GM12878 (cell line): ENCODE measurements at regions of chr4 and their contacts with region 1.

Region 1: GRCh38 chr4:15778289-15779241 is at the start of gene CD38:
- DNase-seq: no peak
- ATAC-seq: peak; percentile 85
- H3K4me3 ChIP-seq: peak within 1 kb of the TSS; percentile 72
- H3K27ac ChIP-seq: peak within 1 kb of the TSS; percentile 78
- H3K4me1 ChIP-seq: peaks cover 36% of the 10 kb centered on the region
- H3K27me3 ChIP-seq: peaks cover 0 to 3% of the 10 kb centered on the region in 2 experiments; a peak in 1 of 4 replicates
- CTCF ChIP-seq: 0 out of 6 replicates have a peak, but pooled peaks of 2 of the 3 experiments have one; percentile 7 to 15
- EP300 ChIP-seq: peak; percentile 65 to 77
- POLR2A ChIP-seq: peak; percentile 78
- RAD21 ChIP-seq: no peak
- polyA plus RNA-seq, gene CD38: 3.5 to 4.8 TPM

Region 2: DNA sequence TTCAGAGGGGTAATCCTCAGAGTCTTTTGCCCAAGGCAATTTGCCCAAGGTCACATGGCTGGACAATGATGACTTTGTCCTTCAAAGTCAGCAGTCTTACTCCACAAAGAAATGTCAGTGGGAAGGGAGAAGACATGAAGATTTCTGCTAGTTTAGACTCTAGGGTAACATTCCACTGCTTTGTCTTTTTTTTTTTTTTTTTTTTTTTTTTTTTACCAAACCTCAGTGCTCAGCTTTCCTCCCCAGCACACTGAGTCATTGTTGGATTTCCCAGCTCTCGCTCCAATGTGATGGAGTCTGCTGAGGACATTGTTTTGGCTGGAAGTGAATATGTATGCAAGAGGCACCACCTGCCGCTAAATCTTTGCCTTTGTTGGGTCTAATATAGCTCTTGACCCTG is 357.9 kb before region 1 on chr4:
- CTCF ChIA-PET with region 1: no interaction called
- POLR2A ChIA-PET with region 1: no interaction called
- RAD21 ChIA-PET with region 1: no interaction called
- SMC1A ChIA-PET with region 1: no interaction called
- in situ Hi-C with region 1: no loop called
- intact Hi-C with region 1: no loop called
- DNase-seq: no peak
- ATAC-seq: no peak
- H3K4me3 ChIP-seq: no peak overlapping the region
- H3K27ac ChIP-seq: no peak overlapping the region
- H3K4me1 ChIP-seq: no peaks in the 10 kb centered on the region
- H3K27me3 ChIP-seq: peaks cover 0 to 1% of the 10 kb centered on the region in 2 experiments; a peak in 1 of 4 replicates
- CTCF ChIP-seq: no peak
- EP300 ChIP-seq: no peak
- POLR2A ChIP-seq: no peak
- RAD21 ChIP-seq: no peak

Region 3: DNA sequence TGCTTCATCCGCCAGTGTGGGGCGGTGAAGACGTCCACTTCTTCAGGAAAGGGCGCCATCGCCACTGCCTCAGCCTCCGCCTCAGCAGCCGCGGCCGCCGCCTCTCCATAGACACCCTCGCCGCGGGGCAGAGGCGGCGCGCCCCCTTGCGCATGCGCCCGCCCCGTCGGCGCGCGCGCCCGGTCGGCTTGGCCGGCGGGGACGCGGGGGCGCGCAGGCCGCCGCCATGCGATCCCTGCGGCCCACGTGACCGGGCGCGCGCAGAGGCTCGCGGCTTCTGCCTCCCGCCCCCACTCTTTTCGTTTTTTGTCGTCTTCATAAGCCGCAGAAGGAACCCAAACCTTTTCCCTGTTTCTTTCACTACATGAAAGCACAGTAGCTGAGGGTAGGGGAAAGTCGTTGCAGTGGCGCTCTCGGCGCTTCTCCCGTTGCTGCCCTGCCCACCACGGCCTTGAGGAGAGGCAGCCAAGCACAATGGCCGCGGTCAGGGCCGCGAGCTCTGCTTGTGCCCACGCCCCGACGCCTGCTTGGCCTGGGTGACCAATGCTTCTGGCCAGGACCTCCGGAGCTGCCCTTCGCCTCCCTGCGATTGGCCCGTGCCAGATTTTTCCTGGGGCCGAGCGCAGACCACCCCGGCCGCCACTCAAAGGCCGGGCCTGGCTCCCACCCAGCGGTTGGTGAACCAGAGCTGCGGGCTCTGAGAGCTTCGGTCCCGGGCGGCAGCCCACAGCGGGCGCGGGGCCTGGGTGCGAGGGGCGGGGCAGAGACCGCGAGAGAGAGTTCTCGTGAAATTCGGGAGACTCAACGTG is 123.1 kb before region 1 on chr4 and contains the start of gene FBXL5:
- CTCF ChIA-PET with region 1: interaction called, 5 read pairs
- POLR2A ChIA-PET with region 1: no interaction called
- RAD21 ChIA-PET with region 1: no interaction called
- SMC1A ChIA-PET with region 1: interaction called, 4 read pairs
- in situ Hi-C with region 1: no loop called
- intact Hi-C with region 1: loop called (anchors 10 kb)
- DNase-seq: peak; percentile 36
- ATAC-seq: peak; percentile 64
- H3K4me3 ChIP-seq: peak within 1 kb of the TSS; percentile 84
- H3K27ac ChIP-seq: peak within 1 kb of the TSS; percentile 95
- H3K4me1 ChIP-seq: peaks cover 15% of the 10 kb centered on the region
- H3K27me3 ChIP-seq: no peaks in the 10 kb centered on the region
- CTCF ChIP-seq: no peak
- EP300 ChIP-seq: no peak
- POLR2A ChIP-seq: peak; percentile 88
- RAD21 ChIP-seq: no peak
- polyA plus RNA-seq, gene FBXL5: 10.1 to 12.3 TPM

Region 4: DNA sequence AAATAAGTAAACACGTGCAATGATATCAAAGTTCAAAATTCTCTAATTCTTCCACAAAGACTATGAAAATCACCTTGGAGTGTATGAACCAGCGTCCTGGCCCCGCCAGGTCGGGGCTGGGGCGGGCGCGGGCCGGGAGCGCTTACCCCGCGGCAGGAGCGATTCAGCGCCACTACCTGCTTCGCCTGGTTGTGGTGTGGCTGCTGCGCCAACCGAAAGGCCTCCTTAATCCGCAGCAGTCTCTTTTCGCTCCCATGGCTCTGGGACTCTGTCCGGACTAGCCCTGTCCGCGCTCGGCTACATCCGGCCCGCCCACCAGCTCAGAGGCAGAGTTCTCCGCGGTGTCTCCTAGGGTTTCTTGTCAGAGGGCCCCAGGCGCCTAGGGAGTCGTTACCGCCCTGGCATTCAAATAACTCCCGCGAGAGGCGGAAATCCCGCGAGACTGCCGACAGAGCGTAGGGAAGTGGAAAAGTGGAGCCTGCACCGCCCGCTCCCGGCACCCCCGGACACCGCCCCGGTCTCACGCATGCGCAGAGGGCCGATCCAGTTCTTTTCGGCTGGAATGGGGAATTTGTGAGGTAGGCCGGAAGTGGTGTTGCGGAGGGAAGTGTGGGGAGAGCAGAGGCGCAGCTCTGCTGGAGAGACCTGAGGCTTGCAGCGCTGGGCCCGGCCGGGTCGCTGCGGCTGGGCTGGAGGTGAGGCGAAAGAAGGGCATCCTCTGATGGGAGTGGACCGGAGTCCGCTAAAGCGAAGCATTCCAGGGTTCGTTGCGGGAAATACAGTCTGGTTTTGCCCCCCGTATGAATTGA is 97.2 kb before region 1 on chr4 and contains the start of gene FAM200B:
- CTCF ChIA-PET with region 1: no interaction called
- POLR2A ChIA-PET with region 1: interaction called, 6 read pairs
- RAD21 ChIA-PET with region 1: interaction called, 4 read pairs
- SMC1A ChIA-PET with region 1: interaction called, 5 read pairs
- in situ Hi-C with region 1: no loop called
- intact Hi-C with region 1: loop called (anchors 2 kb)
- DNase-seq: peak; percentile 93
- ATAC-seq: peak; percentile 89
- H3K4me3 ChIP-seq: peak within 1 kb of the TSS; percentile 75
- H3K27ac ChIP-seq: peak within 1 kb of the TSS; percentile 94
- H3K4me1 ChIP-seq: peaks cover 9% of the 10 kb centered on the region; the same call in 1 of the 2 replicates
- H3K27me3 ChIP-seq: no peaks in the 10 kb centered on the region
- CTCF ChIP-seq: peak in 1 of 3 experiments; percentile 10; a peak in 1 of 6 replicates
- EP300 ChIP-seq: no peak
- POLR2A ChIP-seq: peak; percentile 89
- RAD21 ChIP-seq: no peak
- polyA plus RNA-seq, gene FAM200B: 24.4 to 27.0 TPM

Region 5: DNA sequence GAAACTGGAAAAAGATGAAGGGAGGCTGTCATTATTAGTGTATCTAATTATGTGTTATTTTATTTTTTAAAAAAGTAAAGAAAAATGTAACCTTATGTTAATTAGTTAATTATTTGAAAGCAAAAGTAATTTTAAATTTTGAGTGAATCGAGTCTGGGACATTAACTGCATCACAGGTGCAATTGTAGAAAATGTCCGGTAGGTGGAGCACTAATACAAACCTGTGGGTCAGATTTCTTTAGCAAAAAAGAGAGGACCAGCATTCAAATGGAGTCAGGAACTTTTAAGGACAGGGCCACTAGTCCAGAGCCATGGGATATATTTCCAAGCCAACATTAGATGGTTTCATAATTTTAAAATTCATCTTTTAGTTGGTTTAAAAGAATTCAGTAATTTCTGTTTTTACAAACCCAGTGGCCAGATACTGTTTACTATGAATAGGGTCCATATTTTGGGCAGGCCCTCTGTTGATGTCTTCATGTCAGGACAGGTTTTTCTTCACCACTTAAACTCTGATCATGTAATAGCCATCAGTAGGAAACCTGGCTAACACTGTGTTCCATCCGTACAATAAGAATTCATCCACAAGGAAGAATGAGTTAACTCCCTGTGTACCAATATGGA is 48.5 kb before region 1 on chr4:
- CTCF ChIA-PET with region 1: interaction called, 8 read pairs
- POLR2A ChIA-PET with region 1: no interaction called
- RAD21 ChIA-PET with region 1: interaction called, 3 read pairs
- SMC1A ChIA-PET with region 1: interaction called, 5 read pairs
- in situ Hi-C with region 1: no loop called
- intact Hi-C with region 1: loop called (anchors 1 kb)
- DNase-seq: peak; percentile 2
- ATAC-seq: peak; percentile 84
- H3K4me3 ChIP-seq: no peak overlapping the region
- H3K27ac ChIP-seq: no peak overlapping the region
- H3K4me1 ChIP-seq: no peaks in the 10 kb centered on the region
- H3K27me3 ChIP-seq: no peaks in the 10 kb centered on the region; a peak in 1 of 4 replicates
- CTCF ChIP-seq: peak; percentile 69 to 77 (median 74)
- EP300 ChIP-seq: no peak
- POLR2A ChIP-seq: no peak
- RAD21 ChIP-seq: peak; percentile 92

Region 6: DNA sequence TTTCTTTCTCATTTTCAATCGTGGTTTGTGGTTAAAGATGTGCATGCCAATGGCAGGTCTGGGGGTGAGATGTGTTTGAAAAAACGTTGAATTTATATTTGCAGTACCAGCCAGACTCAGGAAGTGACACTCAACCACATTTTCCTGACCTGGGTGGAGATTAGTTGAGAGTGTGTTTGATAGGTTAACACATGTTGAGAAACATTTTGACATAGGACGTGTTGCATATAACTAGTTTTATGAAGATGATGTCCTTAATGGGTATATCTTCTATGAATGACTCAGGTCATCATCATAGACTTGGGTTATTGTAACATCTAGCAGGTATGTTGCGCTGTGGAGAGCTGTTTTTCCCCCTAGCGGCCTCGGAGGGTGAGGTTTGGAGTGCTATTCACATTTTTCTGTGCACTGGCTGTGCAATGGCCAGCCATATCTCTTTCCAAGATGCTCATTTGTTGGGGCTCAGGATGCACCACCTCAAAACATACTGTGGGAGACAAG is 22.2 kb before region 1 on chr4:
- CTCF ChIA-PET with region 1: interaction called, 14 read pairs
- POLR2A ChIA-PET with region 1: interaction called, 6 read pairs
- RAD21 ChIA-PET with region 1: interaction called, 30 read pairs
- SMC1A ChIA-PET with region 1: interaction called, 83 read pairs
- in situ Hi-C with region 1: no loop called
- intact Hi-C with region 1: loop called (anchors 2 kb)
- DNase-seq: peak; percentile 66
- ATAC-seq: peak; percentile 95
- H3K4me3 ChIP-seq: 0 out of 2 replicates have a peak overlapping the region, but pooled peaks have one; percentile 18
- H3K27ac ChIP-seq: no peak overlapping the region
- H3K4me1 ChIP-seq: peaks cover 18% of the 10 kb centered on the region
- H3K27me3 ChIP-seq: no peaks in the 10 kb centered on the region
- CTCF ChIP-seq: peak; percentile 35 to 67 (median 58); a peak in 5 of 6 replicates
- EP300 ChIP-seq: no peak
- POLR2A ChIP-seq: no peak
- RAD21 ChIP-seq: 0 out of 2 replicates have a peak, but pooled peaks have one; percentile 9

Region 7: GRCh38 chr4:15794905-15795304 is 16.3 kb after region 1 on chr4:
- CTCF ChIA-PET with region 1: interaction called, 3 read pairs
- POLR2A ChIA-PET with region 1: interaction called, 6 read pairs
- RAD21 ChIA-PET with region 1: interaction called, 7 read pairs
- SMC1A ChIA-PET with region 1: interaction called, 18 read pairs
- in situ Hi-C with region 1: no loop called
- intact Hi-C with region 1: no loop called
- DNase-seq: no peak
- ATAC-seq: peak; percentile 53
- H3K4me3 ChIP-seq: no peak overlapping the region
- H3K27ac ChIP-seq: no peak overlapping the region
- H3K4me1 ChIP-seq: peaks cover 7% of the 10 kb centered on the region; the same call in 1 of the 2 replicates
- H3K27me3 ChIP-seq: no peaks in the 10 kb centered on the region
- CTCF ChIP-seq: no peak
- EP300 ChIP-seq: peak in 1 of 2 experiments; percentile 52; a peak in 1 of 4 replicates
- POLR2A ChIP-seq: no peak
- RAD21 ChIP-seq: no peak

Region 8: DNA sequence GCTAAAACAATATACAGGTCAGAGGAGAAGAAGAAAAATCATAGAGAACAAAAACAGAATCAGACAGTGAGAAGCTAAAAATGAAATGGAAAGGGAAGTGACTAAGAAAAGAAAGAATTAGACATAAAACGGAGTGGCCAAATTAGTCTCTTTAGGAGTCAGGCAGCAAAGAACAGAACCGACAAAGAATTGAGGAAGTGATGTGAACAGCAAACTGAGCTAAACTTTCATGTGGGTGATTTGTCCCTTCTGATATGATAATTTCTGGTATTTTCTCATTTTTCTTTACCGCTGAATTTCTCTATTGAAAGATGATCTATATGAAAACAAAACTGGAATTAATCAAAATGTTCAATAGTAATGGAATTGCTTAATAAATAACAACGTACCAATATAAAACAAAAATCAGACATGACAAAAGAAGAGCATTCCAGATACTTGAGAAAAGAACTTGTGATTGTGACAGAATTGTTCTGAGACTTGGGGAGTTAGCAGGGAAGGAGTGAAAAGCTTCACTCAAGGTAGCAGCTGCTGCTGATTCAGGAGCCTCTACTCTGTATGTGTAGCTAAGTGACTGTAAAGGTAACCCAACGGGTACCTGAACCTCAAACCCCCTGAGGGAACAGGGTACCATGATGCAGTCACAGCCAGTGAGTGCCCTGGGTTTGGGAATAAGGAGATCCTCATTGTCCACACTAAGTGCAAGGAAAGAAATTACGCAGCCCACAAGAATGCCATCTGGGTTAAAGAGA is 438.9 kb after region 1 on chr4:
- CTCF ChIA-PET with region 1: no interaction called
- POLR2A ChIA-PET with region 1: no interaction called
- RAD21 ChIA-PET with region 1: no interaction called
- SMC1A ChIA-PET with region 1: no interaction called
- in situ Hi-C with region 1: no loop called
- intact Hi-C with region 1: loop called (anchors 10 kb)
- DNase-seq: no peak
- ATAC-seq: peak; percentile 89
- H3K4me3 ChIP-seq: no peak overlapping the region
- H3K27ac ChIP-seq: peak overlapping the region; percentile 58
- H3K4me1 ChIP-seq: peaks cover 11% of the 10 kb centered on the region
- H3K27me3 ChIP-seq: no peaks in the 10 kb centered on the region
- CTCF ChIP-seq: no peak
- EP300 ChIP-seq: no peak
- POLR2A ChIP-seq: no peak
- RAD21 ChIP-seq: no peak

Region 9: GRCh38 chr4:16807355-16807754 is 1028.8 kb after region 1 on chr4:
- CTCF ChIA-PET with region 1: no interaction called
- POLR2A ChIA-PET with region 1: no interaction called
- RAD21 ChIA-PET with region 1: no interaction called
- SMC1A ChIA-PET with region 1: no interaction called
- in situ Hi-C with region 1: no loop called
- intact Hi-C with region 1: no loop called
- DNase-seq: no peak
- ATAC-seq: no peak
- H3K4me3 ChIP-seq: no peak overlapping the region
- H3K27ac ChIP-seq: no peak overlapping the region
- H3K4me1 ChIP-seq: no peaks in the 10 kb centered on the region
- H3K27me3 ChIP-seq: no peaks in the 10 kb centered on the region
- CTCF ChIP-seq: no peak
- EP300 ChIP-seq: no peak
- POLR2A ChIP-seq: no peak
- RAD21 ChIP-seq: no peak